Naive thymus-derived CD4-positive, alpha-beta T cell (primary cell): ENCODE measurements at regions of chr3 and their contacts with region 1.

Region 1: DNA sequence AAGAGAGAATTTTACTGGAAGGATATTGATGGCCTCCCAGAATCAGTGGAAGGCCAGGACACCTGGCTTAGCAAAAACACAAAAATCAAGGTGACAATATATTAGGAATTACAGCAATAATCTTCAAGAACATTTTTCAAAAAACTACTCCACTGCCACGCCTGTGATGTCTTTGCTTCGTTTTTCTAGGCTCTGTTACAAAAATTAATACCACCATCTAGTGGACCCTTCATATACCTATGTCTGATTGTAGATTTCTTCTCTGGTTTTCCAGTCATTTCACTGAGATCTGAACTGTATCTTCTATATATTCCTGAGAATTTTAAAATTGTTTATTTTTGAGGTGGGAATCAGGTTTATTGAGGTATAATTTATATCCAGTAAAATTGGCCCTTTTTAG is 5.6 kb upstream of the SLC33A1 start:
- DNase-seq: peak in 2 of 9 donors; percentile 18
- ATAC-seq: peak; percentile 46
- H3K4me3 ChIP-seq: no peak overlapping the region
- H3K4me3 Mint-ChIP-seq: no peak overlapping the region
- H3K27ac ChIP-seq: no peak overlapping the region
- H3K27ac Mint-ChIP-seq: no peak overlapping the region
- H3K4me1 ChIP-seq: peaks cover 3% of the 10 kb centered on the region in 2 donors
- H3K4me1 Mint-ChIP-seq: peaks cover 2 to 36% (median 15%) of the 10 kb centered on the region in 7 donors
- H3K27me3 ChIP-seq: no peaks in the 10 kb centered on the region
- H3K27me3 Mint-ChIP-seq: peaks cover 0 to 3% (median 0%) of the 10 kb centered on the region in 5 donors

Region 2: DNA sequence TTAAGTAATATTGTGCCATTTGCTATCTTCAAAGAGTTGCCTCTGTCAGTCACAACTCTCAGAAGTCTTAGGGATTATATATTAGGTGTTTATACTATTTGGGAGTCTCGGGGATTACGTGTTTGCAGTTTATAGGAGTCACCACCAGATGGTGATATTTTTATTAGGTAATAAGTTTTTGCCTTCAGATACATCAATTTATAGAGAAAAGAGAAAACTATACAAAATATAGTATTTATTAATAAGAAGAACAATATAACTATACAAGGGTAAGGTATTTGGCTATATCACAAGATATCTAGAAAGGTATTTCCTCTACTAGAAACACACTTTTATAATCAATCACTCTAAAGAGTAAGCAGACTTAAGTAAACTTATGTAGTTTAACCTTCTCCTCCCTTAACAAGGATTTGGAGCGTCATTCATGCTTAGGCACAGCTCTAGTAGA is 1524.9 kb before region 1 on chr3:
- CTCF ChIA-PET with region 1: no interaction called
- POLR2A ChIA-PET with region 1: no interaction called
- intact Hi-C with region 1: loop called in 1 of 2 experiments (anchors 1 kb)
- DNase-seq: peak in 5 of 9 donors; percentile 22 to 35 (median 26)
- ATAC-seq: peak; percentile 70
- H3K4me3 ChIP-seq: no peak overlapping the region
- H3K4me3 Mint-ChIP-seq: no peak overlapping the region
- H3K27ac ChIP-seq: no peak overlapping the region
- H3K27ac Mint-ChIP-seq: no peak overlapping the region
- H3K4me1 ChIP-seq: no peaks in the 10 kb centered on the region
- H3K4me1 Mint-ChIP-seq: no peaks in the 10 kb centered on the region
- H3K27me3 ChIP-seq: no peaks in the 10 kb centered on the region
- H3K27me3 Mint-ChIP-seq: peaks cover 6 to 41% (median 7%) of the 10 kb centered on the region in 5 donors

Region 3: GRCh38 chr3:155739154-155739553 is 120.7 kb before region 1 on chr3:
- CTCF ChIA-PET with region 1: no interaction called
- POLR2A ChIA-PET with region 1: no interaction called
- intact Hi-C with region 1: loop called in 1 of 2 experiments (anchors 1 kb)
- DNase-seq: peak in 2 of 9 donors; percentile 4 to 10
- ATAC-seq: no peak
- H3K4me3 ChIP-seq: no peak overlapping the region
- H3K4me3 Mint-ChIP-seq: no peak overlapping the region
- H3K27ac ChIP-seq: no peak overlapping the region
- H3K27ac Mint-ChIP-seq: no peak overlapping the region
- H3K4me1 ChIP-seq: peaks cover under 1 to 7% of the 10 kb centered on the region in 2 donors
- H3K4me1 Mint-ChIP-seq: peaks cover 4 to 13% (median 12%) of the 10 kb centered on the region in 7 donors
- H3K27me3 ChIP-seq: peaks cover 0 to 11% of the 10 kb centered on the region in 2 donors
- H3K27me3 Mint-ChIP-seq: peaks cover 46 to 64% (median 54%) of the 10 kb centered on the region in 5 donors

Region 4: GRCh38 chr3:155753036-155753639 is 106.7 kb before region 1 on chr3:
- CTCF ChIA-PET with region 1: no interaction called
- POLR2A ChIA-PET with region 1: no interaction called
- intact Hi-C with region 1: loop called in 1 of 2 experiments (anchors 1 kb)
- DNase-seq: peak in 3 of 9 donors; percentile 4 to 20 (median 9)
- ATAC-seq: peak; percentile 40
- H3K4me3 ChIP-seq: no peak overlapping the region
- H3K4me3 Mint-ChIP-seq: no peak overlapping the region
- H3K27ac ChIP-seq: no peak overlapping the region
- H3K27ac Mint-ChIP-seq: peak overlapping the region in 1 of 9 donors; percentile 18
- H3K4me1 ChIP-seq: no peaks in the 10 kb centered on the region
- H3K4me1 Mint-ChIP-seq: no peaks in the 10 kb centered on the region
- H3K27me3 ChIP-seq: no peaks in the 10 kb centered on the region
- H3K27me3 Mint-ChIP-seq: peaks cover 0 to 7% (median 0%) of the 10 kb centered on the region in 5 donors

Region 5: DNA sequence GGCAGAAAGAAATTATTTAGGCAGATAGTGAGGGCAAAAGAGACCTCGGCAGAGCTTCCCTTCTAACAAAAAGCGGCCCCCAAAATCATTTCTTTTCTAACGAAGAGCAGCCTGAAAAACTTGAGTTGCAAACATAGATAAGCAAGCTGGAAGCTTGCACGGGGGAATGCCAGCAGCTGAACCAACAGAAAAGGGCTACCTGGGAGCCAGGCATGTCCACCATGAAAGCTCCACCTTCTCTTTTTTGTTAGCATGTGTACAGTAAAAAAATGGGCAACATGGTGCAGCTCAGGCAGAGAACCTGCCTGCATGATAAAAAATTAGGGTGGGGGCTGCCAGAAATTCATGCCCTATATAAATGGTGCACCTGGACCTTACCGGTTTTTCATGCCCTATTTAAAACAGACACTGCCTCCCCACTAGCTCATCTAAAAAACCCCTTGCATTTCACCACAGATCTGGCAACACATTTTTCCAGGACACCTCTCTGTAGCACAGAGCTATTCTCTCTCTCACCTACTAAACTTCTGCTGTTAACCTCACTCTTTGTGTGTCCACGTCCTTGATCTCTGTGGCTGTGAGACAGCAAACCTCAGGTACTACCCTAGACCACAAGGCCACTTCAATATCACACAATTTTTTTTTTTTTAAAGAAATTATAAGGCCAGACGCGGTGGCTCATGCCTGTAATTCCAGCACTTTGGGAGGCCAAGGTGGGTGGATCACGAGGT is 24.4 kb before region 1 on chr3:
- CTCF ChIA-PET with region 1: no interaction called
- POLR2A ChIA-PET with region 1: no interaction called
- intact Hi-C with region 1: no loop called
- DNase-seq: no peak
- ATAC-seq: peak; percentile 38
- H3K4me3 ChIP-seq: no peak overlapping the region
- H3K4me3 Mint-ChIP-seq: peak overlapping the region in 1 of 10 donors; percentile 3
- H3K27ac ChIP-seq: no peak overlapping the region
- H3K27ac Mint-ChIP-seq: no peak overlapping the region
- H3K4me1 ChIP-seq: no peaks in the 10 kb centered on the region
- H3K4me1 Mint-ChIP-seq: peaks cover 0 to 25% (median 5%) of the 10 kb centered on the region in 7 donors
- H3K27me3 ChIP-seq: no peaks in the 10 kb centered on the region
- H3K27me3 Mint-ChIP-seq: no peaks in the 10 kb centered on the region